ENCODE measurements at regions of chr2 and their contacts with region 1.

Region 1: GRCh38 chr2:66434679-66435548 is at the start of gene MEIS1:
- DNase-seq: peak; percentile 88 to 94 (median 91)
- ATAC-seq: peak; percentile 86 to 91 (median 88)
- H3K4me3 ChIP-seq: peak within 1 kb of the TSS; percentile 53 to 91 (median 74)
- H3K27ac ChIP-seq: peak within 1 kb of the TSS; percentile 83 to 96 (median 92)
- H3K4me1 ChIP-seq: peaks cover 0 to 20% (median 0%) of the 10 kb centered on the region in 12 donors
- H3K27me3 ChIP-seq: peaks cover 0 to 65% (median 0%) of the 10 kb centered on the region in 9 donors
- CTCF ChIP-seq: peak in 1 of 12 donors; percentile 8
- POLR2A ChIP-seq: peak; percentile 62 to 85
- total RNA-seq, gene MEIS1: 21.3 to 50.8 (median 41.8) TPM

Region 2: GRCh38 chr2:66346231-66346664 is 88.7 kb before region 1 on chr2:
- intact Hi-C with region 1: no loop called
- DNase-seq: no peak
- ATAC-seq: no peak
- H3K4me3 ChIP-seq: no peak overlapping the region
- H3K27ac ChIP-seq: no peak overlapping the region
- H3K4me1 ChIP-seq: no peaks in the 10 kb centered on the region
- H3K27me3 ChIP-seq: no peaks in the 10 kb centered on the region
- CTCF ChIP-seq: no peak
- POLR2A ChIP-seq: no peak

Region 3: GRCh38 chr2:66481100-66481549 is 46.2 kb after region 1 on chr2:
- intact Hi-C with region 1: loop called in 2 of 10 experiments (anchors 1 to 5 kb)
- DNase-seq: peak in 3 of 5 donors; percentile 23 to 51 (median 29)
- ATAC-seq: peak; percentile 14 to 86 (median 82)
- H3K4me3 ChIP-seq: no peak overlapping the region
- H3K27ac ChIP-seq: peak overlapping the region in 11 of 12 donors; percentile 7 to 72 (median 56)
- H3K4me1 ChIP-seq: peaks cover 4 to 52% (median 29%) of the 10 kb centered on the region in 12 donors
- H3K27me3 ChIP-seq: no peaks in the 10 kb centered on the region
- CTCF ChIP-seq: no peak
- POLR2A ChIP-seq: no peak

Region 4: DNA sequence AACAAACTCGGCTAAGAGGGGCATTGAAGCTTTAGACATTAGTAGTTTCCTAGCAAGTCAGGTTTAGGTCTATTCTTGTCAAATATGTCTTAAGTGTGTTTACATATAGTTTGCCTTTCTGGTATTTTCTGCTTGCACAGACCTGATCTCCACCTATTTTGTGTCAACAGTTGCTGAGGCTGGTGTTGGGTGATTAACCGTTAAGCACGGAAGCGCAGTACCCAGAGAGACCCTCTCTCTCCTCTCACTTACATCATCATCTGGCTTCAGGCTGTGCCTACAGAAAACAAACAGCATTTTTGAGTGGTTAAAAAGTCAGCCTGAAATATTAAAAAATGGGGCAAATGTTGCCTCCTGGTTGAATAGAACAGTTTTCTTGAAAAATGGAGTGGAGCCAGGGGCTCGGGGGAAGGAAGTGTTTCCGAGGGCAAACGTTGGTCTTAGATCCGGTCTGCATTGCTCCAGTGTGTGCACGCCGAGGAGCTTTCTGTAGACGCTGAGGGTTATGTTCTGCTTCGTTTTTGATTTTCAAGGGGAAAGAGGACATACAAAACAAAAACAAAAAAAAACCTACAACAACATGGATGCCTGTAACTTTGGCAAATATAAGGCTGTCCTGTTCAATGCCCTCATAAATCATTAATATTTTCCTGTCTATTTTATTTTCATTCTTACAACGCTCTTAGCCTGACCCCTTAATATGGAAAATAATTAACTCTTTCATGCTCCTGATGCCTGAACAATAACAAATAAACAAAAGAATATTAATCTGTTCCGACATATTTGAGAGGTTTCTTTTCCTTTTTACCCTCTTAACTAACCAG is 120.8 kb after region 1 on chr2:
- intact Hi-C with region 1: loop called in 2 of 10 experiments (anchors 5 kb)
- DNase-seq: peak in 3 of 5 donors; percentile 16 to 46 (median 21)
- ATAC-seq: peak; percentile 65 to 74 (median 71)
- H3K4me3 ChIP-seq: peak overlapping the region in 11 of 12 donors; percentile 12 to 52 (median 44)
- H3K27ac ChIP-seq: peak overlapping the region in 11 of 12 donors; percentile 18 to 84 (median 75)
- H3K4me1 ChIP-seq: peaks cover 0 to 25% (median 8%) of the 10 kb centered on the region in 12 donors
- H3K27me3 ChIP-seq: no peaks in the 10 kb centered on the region
- CTCF ChIP-seq: no peak
- POLR2A ChIP-seq: no peak

Region 5: GRCh38 chr2:66587216-66587615 is 152.3 kb after region 1 on chr2:
- intact Hi-C with region 1: no loop called
- DNase-seq: no peak
- ATAC-seq: no peak
- H3K4me3 ChIP-seq: no peak overlapping the region
- H3K27ac ChIP-seq: no peak overlapping the region
- H3K4me1 ChIP-seq: peaks cover 0 to under 1% (median 0%) of the 10 kb centered on the region in 12 donors
- H3K27me3 ChIP-seq: peaks cover 3 to 58% (median 26%) of the 10 kb centered on the region in 9 donors
- CTCF ChIP-seq: peak in 1 of 12 donors; percentile 28
- POLR2A ChIP-seq: no peak

Region 6: DNA sequence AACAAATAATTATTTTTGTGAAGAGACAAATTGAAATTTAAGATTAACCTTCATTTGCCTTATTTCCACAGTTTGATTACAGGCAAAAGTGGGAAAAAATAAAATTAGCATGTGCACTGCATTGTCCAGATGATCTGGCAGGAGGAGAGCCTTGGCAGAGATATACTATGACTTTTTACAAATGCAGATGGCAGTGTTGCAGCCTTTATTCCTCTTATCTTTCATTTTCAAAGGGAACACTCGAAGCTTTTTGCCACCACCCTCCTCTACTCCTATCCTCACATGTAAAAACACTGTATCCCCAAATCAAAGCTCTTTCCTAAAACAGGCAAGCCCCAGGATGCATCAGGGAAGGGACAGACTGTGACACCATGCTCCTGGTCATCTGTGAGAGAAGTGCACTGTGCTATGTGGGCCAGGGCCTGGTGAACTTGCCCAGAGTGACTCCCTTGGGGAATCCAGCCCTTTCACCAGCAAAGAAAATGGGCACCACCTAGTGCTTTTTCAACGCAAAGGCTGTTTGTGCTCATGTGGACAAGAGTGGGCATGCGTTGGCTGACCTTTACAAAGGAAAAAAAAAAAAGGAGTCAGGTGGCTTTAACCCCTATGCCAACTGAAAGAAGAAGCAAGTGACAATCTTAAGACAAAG is 887.6 kb after region 1 on chr2:
- intact Hi-C with region 1: loop called in 1 of 10 experiments (anchors 5 kb)
- DNase-seq: peak in 3 of 5 donors; percentile 27 to 57 (median 43)
- ATAC-seq: peak; percentile 51 to 74 (median 64)
- H3K4me3 ChIP-seq: no peak overlapping the region
- H3K27ac ChIP-seq: peak overlapping the region in 1 of 12 donors; percentile 61
- H3K4me1 ChIP-seq: peaks cover 0 to 13% (median 0%) of the 10 kb centered on the region in 12 donors
- H3K27me3 ChIP-seq: peaks cover 0 to 16% (median 0%) of the 10 kb centered on the region in 9 donors
- CTCF ChIP-seq: peak in 7 of 12 donors; percentile 7 to 42 (median 27)
- POLR2A ChIP-seq: no peak

Region 7: DNA sequence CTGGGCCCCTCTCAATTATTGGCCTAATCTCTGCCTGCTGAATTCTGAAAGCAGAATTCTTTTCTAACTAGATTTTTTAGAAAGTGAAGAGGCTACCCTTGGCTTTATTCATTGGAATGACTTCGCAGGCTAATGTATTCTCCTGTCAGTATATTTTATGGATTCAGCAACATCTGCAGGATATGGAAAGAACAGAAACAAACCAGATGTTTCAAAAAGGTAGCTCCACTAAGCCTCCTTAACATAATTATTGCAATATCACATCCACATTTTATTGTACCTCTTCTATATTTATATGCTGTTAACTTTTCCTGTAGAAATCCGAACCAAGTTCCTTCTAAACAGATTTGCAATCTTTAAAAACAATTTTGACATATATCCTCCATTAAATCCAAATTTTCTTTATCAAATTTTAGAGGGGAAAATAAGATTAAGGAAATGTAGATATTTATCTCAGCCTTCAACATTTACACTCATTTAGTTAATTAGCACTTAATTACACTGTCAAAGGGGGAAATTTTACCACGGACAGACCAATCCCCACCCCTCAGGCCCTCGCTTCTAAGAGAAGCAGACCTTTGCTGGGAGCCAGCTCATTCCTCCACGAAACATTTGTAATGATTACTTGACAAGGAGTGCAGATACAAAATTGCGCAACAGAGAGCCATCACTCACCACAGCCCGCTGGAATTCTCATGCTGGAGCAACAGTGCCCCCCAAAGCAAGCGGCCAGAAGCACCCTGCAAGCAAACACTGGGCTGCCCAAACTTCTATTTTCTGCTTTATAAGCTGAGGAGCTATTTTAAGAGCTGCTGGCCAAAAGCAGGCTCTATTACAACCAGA is 1215.6 kb after region 1 on chr2:
- intact Hi-C with region 1: loop called in 6 of 10 experiments (anchors 2 to 10 kb)
- DNase-seq: peak; percentile 79 to 88 (median 85)
- ATAC-seq: peak; percentile 94 to 95 (median 94)
- H3K4me3 ChIP-seq: no peak overlapping the region
- H3K27ac ChIP-seq: peak overlapping the region in 11 of 12 donors; percentile 17 to 84 (median 77)
- H3K4me1 ChIP-seq: peaks cover 0 to 39% (median 21%) of the 10 kb centered on the region in 12 donors
- H3K27me3 ChIP-seq: no peaks in the 10 kb centered on the region
- CTCF ChIP-seq: peak; percentile 25 to 83 (median 66)
- POLR2A ChIP-seq: no peak

Region 8: DNA sequence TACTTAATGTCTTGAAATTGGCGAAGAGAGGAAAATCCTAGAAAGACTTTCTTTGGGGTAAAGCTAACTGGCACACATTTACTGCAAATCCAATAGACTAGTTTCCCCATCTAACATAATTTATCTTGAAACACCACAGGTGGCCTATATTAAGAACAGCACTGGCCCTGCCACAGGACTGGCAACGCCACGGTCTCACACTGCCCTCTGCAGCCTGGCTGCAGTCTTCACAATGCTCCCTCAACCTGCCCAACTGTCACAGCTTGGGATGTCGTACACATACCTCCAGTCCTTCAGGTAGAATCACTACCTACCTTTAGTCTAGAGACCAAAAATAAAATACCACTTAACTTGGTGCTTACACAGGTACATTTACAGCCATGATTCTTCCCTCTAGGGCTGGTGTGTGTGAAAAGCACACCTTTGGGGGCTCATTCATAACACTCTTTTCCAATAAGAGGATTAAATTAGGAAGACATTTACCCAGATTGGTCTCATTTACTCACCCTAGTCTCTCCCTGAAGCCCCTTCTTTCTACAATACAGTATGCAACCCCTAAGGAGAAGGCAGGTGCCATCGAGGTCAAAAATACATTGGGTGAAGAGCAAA is 1405.7 kb after region 1 on chr2:
- intact Hi-C with region 1: loop called in 4 of 10 experiments (anchors 5 to 10 kb)
- DNase-seq: peak; percentile 61 to 82 (median 70)
- ATAC-seq: peak; percentile 94 to 99 (median 98)
- H3K4me3 ChIP-seq: no peak overlapping the region
- H3K27ac ChIP-seq: no peak overlapping the region
- H3K4me1 ChIP-seq: no peaks in the 10 kb centered on the region
- H3K27me3 ChIP-seq: peaks cover 0 to 4% (median 0%) of the 10 kb centered on the region in 9 donors
- CTCF ChIP-seq: peak; percentile 56 to 84 (median 74)
- POLR2A ChIP-seq: no peak

Region 9: GRCh38 chr2:67917332-67918054 is 1482.6 kb after region 1 on chr2:
- intact Hi-C with region 1: no loop called
- DNase-seq: no peak
- ATAC-seq: peak in 1 of 4 donors; percentile 60
- H3K4me3 ChIP-seq: no peak overlapping the region
- H3K27ac ChIP-seq: peak overlapping the region in 3 of 12 donors; percentile 22 to 67 (median 24)
- H3K4me1 ChIP-seq: peaks cover 0 to 3% (median 0%) of the 10 kb centered on the region in 12 donors
- H3K27me3 ChIP-seq: peaks cover 0 to 3% (median 0%) of the 10 kb centered on the region in 9 donors
- CTCF ChIP-seq: no peak
- POLR2A ChIP-seq: no peak

Measured in heart left ventricle (tissue), 16 donors.